Activated T-helper 2 cell treated with anti-CD3 and anti-CD28 coated beads, Interferon-gamma antibody, Interleukin-2, Interleukin-4, amounts not matched to agents 10 μg/mL and 5 μg/mL and 100 μg/mL, durations not matched to agents 14 hours and 24 hours and 36 hours (primary cell): ENCODE measurements at regions of chr19 and their contacts with region 1.

Region 1: GRCh38 chr19:49877020-49877878 is at the starts of genes AKT1S1 and TBC1D17:
- DNase-seq: peak; percentile 99
- H3K4me3 Mint-ChIP-seq: no peak within 1 kb of the TSS
- H3K27ac Mint-ChIP-seq: no peak within 1 kb of the TSS
- H3K4me1 Mint-ChIP-seq: peaks cover 22% of the 10 kb centered on the region
- H3K27me3 Mint-ChIP-seq: no peaks in the 10 kb centered on the region
- total RNA-seq, gene AKT1S1: 26.6 and 29.7 TPM in 2 replicates
- total RNA-seq, gene TBC1D17: 40.0 and 42.3 TPM in 2 replicates

Region 2: DNA sequence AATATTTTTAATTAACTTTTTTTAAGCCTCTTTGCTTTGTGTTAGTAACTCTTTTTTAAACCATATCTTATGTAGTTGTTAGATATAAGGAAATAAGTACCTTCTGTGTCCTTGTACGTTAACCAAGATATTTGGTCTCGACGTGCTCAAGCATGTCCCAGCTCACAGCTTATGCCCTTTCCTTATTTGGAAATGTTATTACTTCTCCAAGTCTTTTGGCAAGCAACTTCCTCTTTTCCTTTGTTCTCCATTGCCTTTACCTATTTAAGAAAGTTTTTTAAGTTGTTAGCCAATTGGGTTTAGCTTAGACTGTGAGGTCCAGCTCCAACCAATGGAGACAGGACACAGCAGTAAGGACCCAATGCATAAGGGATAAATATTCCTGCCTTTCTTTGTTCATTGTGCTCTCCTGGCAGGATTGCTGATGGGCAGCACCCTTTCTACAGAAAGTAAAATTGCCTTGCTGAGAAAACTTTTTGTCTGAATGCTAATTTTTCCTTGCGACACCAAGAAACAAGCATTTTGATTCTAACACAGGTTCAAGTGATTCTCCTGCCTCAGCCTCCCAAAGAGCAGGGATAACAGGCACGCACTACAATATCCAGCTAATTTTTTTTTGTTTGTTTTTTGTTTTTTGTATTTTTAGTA is 508.4 kb before region 1 on chr19:
- intact Hi-C with region 1: no loop called
- DNase-seq: no peak
- H3K4me3 Mint-ChIP-seq: no peak overlapping the region
- H3K27ac Mint-ChIP-seq: no peak overlapping the region
- H3K4me1 Mint-ChIP-seq: no peaks in the 10 kb centered on the region
- H3K27me3 Mint-ChIP-seq: peaks cover 14% of the 10 kb centered on the region

Region 3: DNA sequence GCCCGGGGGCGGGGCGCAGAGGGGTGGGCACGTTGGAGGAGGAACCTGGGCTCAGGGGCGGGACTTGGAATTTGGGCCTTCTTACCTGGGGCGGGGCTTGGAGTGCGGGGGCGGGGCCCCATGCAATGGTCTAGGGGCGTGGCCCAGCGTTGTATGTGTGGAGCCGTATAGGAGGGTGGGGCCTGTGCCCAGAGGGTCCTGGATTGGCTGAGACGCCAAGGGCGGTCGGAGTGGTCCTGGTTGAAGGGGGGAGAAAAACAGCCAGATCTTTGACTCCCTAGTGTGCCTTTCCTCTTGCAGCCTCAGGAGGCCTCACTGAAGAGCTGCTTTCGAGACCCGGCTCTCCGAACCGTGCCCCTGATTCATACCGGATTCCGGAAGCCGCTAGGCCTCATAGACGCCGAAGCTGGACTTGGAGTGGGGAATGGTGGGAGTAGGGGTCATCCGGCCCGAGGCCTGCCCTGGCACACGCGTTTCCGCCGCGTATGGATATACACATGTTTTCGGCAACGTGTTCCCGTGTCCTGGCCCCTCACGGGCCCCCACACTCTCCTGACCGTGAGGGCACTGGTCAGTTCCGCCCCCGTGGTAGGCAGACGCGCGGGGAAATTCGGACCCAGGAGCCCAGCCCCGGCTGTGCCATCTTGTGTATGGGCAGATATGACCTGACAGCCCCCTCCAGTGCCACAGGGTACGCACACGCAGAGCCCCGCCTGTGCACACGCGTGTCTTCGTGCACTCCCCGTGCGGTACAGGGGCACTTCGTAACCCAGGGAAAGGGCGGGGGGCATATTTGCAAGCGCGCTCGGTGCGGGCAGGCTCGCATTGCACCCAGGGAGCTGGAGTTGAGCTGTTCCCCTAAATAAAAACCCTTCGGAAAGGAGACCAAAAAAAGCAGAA is 286.9 kb before region 1 on chr19:
- intact Hi-C with region 1: loop called (anchors 2 kb)
- DNase-seq: peak; percentile 94
- H3K4me3 Mint-ChIP-seq: peak overlapping the region; percentile 83
- H3K27ac Mint-ChIP-seq: peak overlapping the region; percentile 82
- H3K4me1 Mint-ChIP-seq: peaks cover 22% of the 10 kb centered on the region
- H3K27me3 Mint-ChIP-seq: peaks cover 7% of the 10 kb centered on the region

Region 4: GRCh38 chr19:49766007-49766937 is 111.0 kb before region 1 on chr19:
- intact Hi-C with region 1: loop called (anchors 1 kb)
- DNase-seq: peak; percentile 99
- H3K4me3 Mint-ChIP-seq: peak overlapping the region; percentile 91
- H3K27ac Mint-ChIP-seq: peak overlapping the region; percentile 89
- H3K4me1 Mint-ChIP-seq: peaks cover 18% of the 10 kb centered on the region
- H3K27me3 Mint-ChIP-seq: no peaks in the 10 kb centered on the region

Region 5: GRCh38 chr19:49850473-49851342 is 26.5 kb before region 1 on chr19 and contains the start of gene PTOV1:
- intact Hi-C with region 1: loop called (anchors 1 kb)
- DNase-seq: peak; percentile 84
- H3K4me3 Mint-ChIP-seq: peak within 1 kb of the TSS; percentile 89
- H3K27ac Mint-ChIP-seq: peak within 1 kb of the TSS; percentile 96
- H3K4me1 Mint-ChIP-seq: peaks cover 37% of the 10 kb centered on the region
- H3K27me3 Mint-ChIP-seq: no peaks in the 10 kb centered on the region
- total RNA-seq, gene PTOV1: 127 and 134 TPM in 2 replicates

Region 6: DNA sequence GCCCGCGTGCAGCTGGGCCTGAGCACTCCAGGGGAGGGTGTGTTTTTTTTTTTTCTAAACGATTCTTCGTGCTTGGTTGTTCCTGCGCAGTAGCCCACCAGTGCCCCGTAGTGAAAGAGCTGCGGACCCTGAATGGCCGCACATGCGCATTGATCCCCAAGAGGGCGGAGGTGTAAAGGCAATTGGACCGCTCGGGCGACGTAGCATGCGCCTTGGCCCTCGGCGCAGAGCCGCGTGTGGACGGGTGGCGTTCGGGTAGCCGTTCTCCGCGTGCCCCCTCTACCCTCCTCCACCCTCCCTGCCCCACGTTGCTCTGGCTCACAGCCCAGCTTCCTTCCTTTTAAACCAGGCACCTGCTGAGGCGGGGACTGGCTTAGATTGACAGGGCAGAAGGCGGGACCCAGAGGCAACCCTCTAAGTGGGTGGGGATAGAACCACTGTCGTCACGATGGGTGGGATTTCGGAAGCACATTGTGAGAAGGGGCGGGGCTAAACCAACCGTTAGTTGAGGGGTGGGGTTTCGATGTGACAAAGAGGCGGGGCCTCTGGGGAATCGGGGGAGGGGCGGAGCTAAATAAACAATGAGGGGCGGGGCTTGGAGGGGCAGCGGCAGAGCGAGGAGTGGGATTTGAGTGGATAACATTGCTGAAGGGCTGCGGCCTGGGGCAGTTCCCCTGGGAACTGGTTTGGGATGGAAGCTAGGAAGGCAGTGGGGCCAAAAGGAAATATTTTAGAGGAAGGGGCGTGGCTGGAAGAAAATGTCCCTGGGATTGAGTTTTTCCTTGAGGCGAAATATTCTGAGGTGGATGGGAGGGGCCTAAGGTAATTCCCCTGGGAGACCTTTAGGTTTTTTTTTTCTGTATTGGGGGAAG is 52.6 kb after region 1 on chr19:
- intact Hi-C with region 1: loop called (anchors 2 kb)
- DNase-seq: peak; percentile 92
- H3K4me3 Mint-ChIP-seq: peak overlapping the region; percentile 98
- H3K27ac Mint-ChIP-seq: peak overlapping the region; percentile 98
- H3K4me1 Mint-ChIP-seq: peaks cover 36% of the 10 kb centered on the region
- H3K27me3 Mint-ChIP-seq: no peaks in the 10 kb centered on the region